H1 (cell line): ENCODE measurements at regions of chr9 and their contacts with region 1.

Region 1: GRCh38 chr9:86282077-86282978 is at the start of gene ISCA1:
- DNase-seq: peak; percentile 85 to 100
- H3K4me3 ChIP-seq: peak within 1 kb of the TSS; percentile 88 to 96 (median 93)
- H3K27ac ChIP-seq: peak within 1 kb of the TSS; percentile 90
- H3K4me1 ChIP-seq: peaks cover 0 to 9% (median 6%) of the 10 kb centered on the region in 4 experiments; a peak in 5 of 7 replicates
- H3K27me3 ChIP-seq: no peaks in the 10 kb centered on the region; a peak in 1 of 7 replicates
- CTCF ChIP-seq: no peak
- EP300 ChIP-seq: no peak
- POLR2A ChIP-seq: peak; percentile 76 to 82
- RAD21 ChIP-seq: no peak
- total RNA-seq, gene ISCA1: 39.0 and 40.0 TPM in 2 replicates

Region 2: DNA sequence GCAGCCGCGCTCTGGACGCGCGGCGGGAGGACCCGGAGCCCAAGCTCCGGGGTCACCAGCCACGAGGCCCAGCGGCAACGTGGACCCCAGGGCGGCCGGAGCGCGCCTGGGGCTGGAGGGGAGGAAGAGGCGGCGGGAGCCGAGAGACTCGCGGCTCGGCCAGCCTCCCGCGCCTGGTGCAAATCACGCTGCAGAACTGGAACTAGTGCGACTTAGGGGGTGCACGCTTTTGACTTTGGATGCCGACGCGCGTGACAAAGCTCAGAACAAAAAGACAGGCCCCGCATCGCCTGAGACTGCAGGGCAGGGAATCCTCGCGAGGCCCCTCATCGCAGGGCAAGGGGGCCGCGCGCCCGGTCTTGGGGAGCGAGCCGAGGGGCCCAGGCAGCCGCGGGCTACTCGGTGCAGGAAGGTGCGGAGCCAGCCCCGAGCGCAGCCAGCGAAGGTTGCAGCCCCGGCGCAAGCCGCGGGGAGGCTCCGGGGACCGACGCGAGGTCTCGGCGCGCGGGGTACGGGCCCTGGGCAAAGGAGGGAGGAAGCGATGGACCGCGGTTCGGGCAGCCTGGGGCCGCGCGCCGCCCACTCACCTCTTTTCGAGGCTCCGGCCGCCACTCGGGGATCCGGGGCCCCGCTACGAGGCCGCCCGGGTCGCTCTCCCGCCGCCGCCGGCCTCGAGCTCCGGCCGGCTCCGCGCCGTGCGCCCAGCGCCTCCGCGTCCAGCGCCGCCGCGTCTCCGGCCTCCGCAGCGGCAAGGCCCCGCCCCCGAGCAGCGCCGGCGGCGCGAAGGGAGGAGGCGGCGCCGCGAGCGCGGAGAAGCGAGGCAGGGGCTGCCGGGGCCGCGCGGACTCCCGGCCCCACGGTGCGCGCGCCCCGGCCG is 183.3 kb before region 1 on chr9 and contains the start of gene GOLM1:
- CTCF ChIA-PET with region 1: no interaction called
- POLR2A ChIA-PET with region 1: interaction called, 14 read pairs
- DNase-seq: peak in 1 of 2 experiments; percentile 74
- H3K4me3 ChIP-seq: peak within 1 kb of the TSS; percentile 51 to 97 (median 78)
- H3K27ac ChIP-seq: no peak within 1 kb of the TSS
- H3K4me1 ChIP-seq: peaks cover 0 to 10% (median 1%) of the 10 kb centered on the region in 4 experiments; a peak in 5 of 7 replicates
- H3K27me3 ChIP-seq: peaks cover 0 to 14% (median 6%) of the 10 kb centered on the region in 4 experiments; a peak in 5 of 7 replicates
- CTCF ChIP-seq: peak in 2 of 3 experiments; percentile 14 to 35; a peak in 3 of 4 replicates
- EP300 ChIP-seq: no peak
- POLR2A ChIP-seq: peak; percentile 62
- RAD21 ChIP-seq: peak; percentile 20 to 47; a peak in 3 of 4 replicates
- total RNA-seq, gene GOLM1: 88.9 and 89.4 TPM in 2 replicates

Region 3: DNA sequence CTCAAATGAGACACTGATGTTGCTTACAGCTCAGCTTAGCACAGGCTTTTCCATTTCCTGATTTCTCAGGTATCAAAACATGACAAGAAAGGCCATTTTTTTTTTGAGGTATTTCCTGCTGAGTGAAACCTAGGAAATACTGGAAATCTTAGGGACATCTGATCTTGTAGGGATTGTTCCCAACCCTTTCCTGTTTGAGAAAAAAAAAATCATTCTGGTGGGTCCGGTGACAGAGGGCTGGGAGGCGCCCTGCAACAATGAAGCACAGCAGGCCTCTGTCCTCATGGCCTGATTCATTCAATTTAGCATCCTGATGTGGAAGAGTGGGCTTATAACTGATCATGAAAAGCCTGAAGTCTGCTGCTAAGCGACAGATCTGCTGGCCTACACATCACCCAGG is 19.9 kb before region 1 on chr9:
- CTCF ChIA-PET with region 1: interaction called, 17 read pairs
- POLR2A ChIA-PET with region 1: interaction called, 17 read pairs
- DNase-seq: no peak
- H3K4me3 ChIP-seq: no peak overlapping the region
- H3K27ac ChIP-seq: no peak overlapping the region
- H3K4me1 ChIP-seq: peaks cover 0 to 4% (median 0%) of the 10 kb centered on the region in 4 experiments; a peak in 1 of 7 replicates
- H3K27me3 ChIP-seq: no peaks in the 10 kb centered on the region
- CTCF ChIP-seq: no peak
- EP300 ChIP-seq: no peak
- POLR2A ChIP-seq: no peak
- RAD21 ChIP-seq: no peak

Region 4: GRCh38 chr9:86500667-86501435 is 218.5 kb after region 1 on chr9:
- CTCF ChIA-PET with region 1: no interaction called
- POLR2A ChIA-PET with region 1: no interaction called
- DNase-seq: no peak
- H3K4me3 ChIP-seq: no peak overlapping the region
- H3K27ac ChIP-seq: no peak overlapping the region
- H3K4me1 ChIP-seq: no peaks in the 10 kb centered on the region
- H3K27me3 ChIP-seq: no peaks in the 10 kb centered on the region
- CTCF ChIP-seq: no peak
- EP300 ChIP-seq: no peak
- POLR2A ChIP-seq: no peak
- RAD21 ChIP-seq: no peak